Adrenal gland (tissue), 19 donors: ENCODE measurements at regions of chr14 and their contacts with region 1.

Region 1: DNA sequence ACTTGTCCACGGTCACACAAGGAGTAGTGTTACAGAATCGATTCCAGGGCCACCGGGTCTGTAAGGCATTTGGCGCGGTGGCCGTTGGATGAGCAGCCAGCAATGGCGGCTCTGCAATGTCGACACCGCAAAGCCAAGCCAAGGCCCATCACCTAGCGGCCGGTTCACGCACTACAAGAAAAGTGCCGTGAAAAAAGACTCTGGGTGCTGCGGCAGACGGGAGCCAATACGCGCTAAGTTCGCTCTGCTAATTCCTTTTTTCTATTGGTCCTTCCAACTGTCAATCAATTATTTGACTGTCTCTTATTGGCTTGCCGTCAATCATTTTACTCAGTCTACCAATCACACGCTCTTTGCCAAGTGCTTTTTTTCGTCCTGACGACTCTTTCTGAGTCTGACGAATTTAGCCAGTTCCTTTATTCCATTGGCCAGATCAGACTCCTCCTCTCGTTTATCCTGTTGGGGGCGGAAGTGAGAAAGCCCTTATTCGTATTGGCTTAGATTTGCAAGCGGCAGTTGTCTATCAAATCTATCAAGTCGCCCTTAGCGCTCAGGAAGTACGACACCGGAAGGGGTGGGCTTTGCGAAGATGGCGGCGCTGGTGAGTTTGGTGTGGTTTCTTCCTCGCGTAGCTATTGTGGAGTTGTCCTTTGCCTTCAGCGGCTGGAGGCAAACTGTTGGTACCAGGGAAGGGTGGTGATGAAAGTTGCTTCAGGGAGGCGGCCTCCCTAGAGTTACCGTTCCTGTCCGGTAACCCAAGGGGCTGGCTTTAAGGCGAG is at the start of gene NGDN:
- DNase-seq: peak; percentile 94 to 99 (median 97)
- H3K4me3 ChIP-seq: peak within 1 kb of the TSS; percentile 50 to 100 (median 76)
- H3K27ac ChIP-seq: peak within 1 kb of the TSS; percentile 43 to 83 (median 78)
- H3K4me1 ChIP-seq: peaks cover 3 to 7% of the 10 kb centered on the region in 2 donors
- H3K27me3 ChIP-seq: no peaks in the 10 kb centered on the region
- CTCF ChIP-seq: peak; percentile 83 to 97 (median 93)
- POLR2A ChIP-seq: peak; percentile 58 to 61
- total RNA-seq, gene NGDN: 24.4 to 61.3 (median 36.3) TPM

Region 2: DNA sequence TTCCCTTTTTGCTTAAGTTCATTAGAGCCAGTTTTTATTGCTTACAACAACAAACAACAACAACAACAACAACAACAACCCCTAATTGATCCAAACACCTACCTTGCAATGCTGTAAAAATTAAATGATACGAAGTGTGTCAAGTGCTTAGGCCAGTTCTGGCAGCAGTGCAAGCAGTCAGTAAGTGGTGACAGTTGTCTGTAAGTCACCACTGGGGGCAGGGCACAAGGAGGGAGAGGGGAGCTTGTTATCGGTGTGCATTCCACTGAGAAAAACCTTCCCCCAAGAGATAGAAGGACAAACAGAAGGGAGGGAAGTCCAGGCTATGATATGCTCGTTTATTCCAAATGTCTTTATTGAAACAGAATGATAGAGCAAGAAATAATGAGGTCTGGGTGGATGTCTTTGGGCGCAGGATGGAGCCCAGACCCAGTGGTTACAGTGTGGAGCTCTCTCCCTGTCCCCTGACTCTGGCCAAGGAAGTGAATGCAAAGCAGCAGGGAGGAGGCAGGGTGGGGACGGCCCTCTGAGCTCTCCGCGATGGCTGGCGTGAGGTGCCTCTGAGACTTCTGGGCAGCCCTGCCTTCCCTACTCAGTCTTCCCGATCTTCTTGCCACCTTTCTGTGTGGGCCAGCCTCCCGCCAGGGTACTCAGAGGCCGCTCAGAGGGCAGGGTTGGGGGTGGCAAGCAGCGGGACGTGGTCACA is 123.2 kb before region 1 on chr14:
- intact Hi-C with region 1: loop called in 1 of 2 experiments (anchors 10 kb)
- DNase-seq: peak in 1 of 7 donors; percentile 49
- H3K4me3 ChIP-seq: no peak overlapping the region
- H3K27ac ChIP-seq: no peak overlapping the region
- H3K4me1 ChIP-seq: no peaks in the 10 kb centered on the region
- H3K27me3 ChIP-seq: no peaks in the 10 kb centered on the region
- CTCF ChIP-seq: no peak
- POLR2A ChIP-seq: no peak

Region 3: GRCh38 chr14:23544511-23545447 is 75.5 kb after region 1 on chr14:
- intact Hi-C with region 1: loop called in 1 of 2 experiments (anchors 5 kb)
- DNase-seq: peak in 4 of 7 donors; percentile 21 to 80 (median 46)
- H3K4me3 ChIP-seq: no peak overlapping the region
- H3K27ac ChIP-seq: peak overlapping the region in 2 of 5 donors; percentile 49 to 52
- H3K4me1 ChIP-seq: peaks cover 0 to 12% of the 10 kb centered on the region in 2 donors
- H3K27me3 ChIP-seq: no peaks in the 10 kb centered on the region
- CTCF ChIP-seq: no peak
- POLR2A ChIP-seq: no peak